AG04450 (cell line): ENCODE measurements at regions of chr11 and their contacts with region 1.

Region 1: GRCh38 chr11:46278387-46279125 is 1.1 kb downstream of the CREB3L1 start:
- DNase-seq: no peak
- H3K4me3 ChIP-seq: peak overlapping the region; percentile 95
- H3K27ac ChIP-seq: peak overlapping the region; percentile 91
- H3K27me3 ChIP-seq: no peaks in the 10 kb centered on the region
- CTCF ChIP-seq: peak; percentile 83

Region 2: DNA sequence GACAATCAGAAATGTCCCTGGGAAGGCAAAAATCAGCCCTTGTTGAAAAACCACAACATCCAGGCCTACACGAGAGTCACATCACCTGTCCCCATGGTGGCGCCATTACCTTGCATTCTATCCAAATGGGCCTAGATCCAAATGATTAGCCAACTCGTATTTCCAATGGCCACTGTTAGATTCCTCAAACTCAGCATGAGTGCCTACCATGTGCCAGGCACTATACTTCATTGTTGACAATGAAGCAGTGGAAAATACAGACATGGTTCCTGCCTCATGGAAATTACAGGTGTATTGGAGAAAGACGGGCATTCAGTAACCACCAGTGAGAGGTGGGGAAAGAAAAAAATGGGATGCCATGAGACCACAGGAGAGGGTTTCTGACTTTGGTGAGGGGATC is 30.9 kb before region 1 on chr11:
- CTCF ChIA-PET with region 1: interaction called, 89 read pairs
- POLR2A ChIA-PET with region 1: interaction called, 15 read pairs
- DNase-seq: no peak
- H3K4me3 ChIP-seq: no peak overlapping the region
- H3K27ac ChIP-seq: peak overlapping the region; percentile 99
- H3K27me3 ChIP-seq: no peaks in the 10 kb centered on the region
- CTCF ChIP-seq: peak; percentile 10; the same call in 1 of the 2 replicates

Region 3: GRCh38 chr11:46308631-46309419 is 30.3 kb after region 1 on chr11:
- CTCF ChIA-PET with region 1: interaction called, 51 read pairs
- POLR2A ChIA-PET with region 1: no interaction called
- DNase-seq: no peak
- H3K4me3 ChIP-seq: no peak overlapping the region
- H3K27ac ChIP-seq: peak overlapping the region; percentile 47
- H3K27me3 ChIP-seq: no peaks in the 10 kb centered on the region
- CTCF ChIP-seq: peak; percentile 87

Region 4: DNA sequence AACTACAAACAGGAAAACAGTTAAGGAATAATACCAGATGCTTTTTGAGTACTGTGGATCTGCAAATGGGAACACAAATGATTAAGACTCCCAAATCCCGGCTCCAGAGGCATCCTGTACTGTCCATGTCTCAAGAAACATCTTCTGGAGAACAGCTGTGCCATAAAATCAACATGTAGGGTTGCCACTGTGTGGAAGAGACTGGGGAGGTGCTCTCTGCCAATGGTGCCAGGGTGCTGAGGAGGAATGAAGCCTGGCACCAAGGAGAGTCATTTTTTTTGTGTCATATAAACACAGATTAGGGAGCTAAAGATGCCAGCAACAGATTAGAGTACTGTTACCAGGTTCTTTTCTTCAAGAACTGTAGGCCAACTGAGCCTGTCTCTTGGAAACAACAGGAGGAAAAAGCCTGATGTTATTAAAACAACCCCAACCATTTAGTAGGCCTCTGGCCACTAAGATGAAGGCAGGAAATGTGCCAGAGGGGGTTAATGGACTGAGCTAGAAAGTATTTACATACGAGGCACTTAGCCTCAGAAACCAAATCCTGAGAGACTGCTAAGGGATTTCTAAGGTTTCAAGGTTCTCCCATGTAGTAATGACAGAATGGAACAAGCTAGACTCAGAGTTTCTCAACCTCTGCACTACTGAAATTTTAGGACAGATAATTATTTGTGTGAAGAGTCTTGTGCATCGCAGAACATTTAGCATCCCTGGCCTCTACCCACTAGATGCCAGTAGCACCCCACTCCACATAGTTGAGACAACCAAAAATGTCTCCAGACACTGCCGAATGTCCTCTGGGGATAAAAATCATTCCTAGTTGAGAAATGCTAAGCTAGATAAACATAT is 167.6 kb after region 1 on chr11:
- CTCF ChIA-PET with region 1: no interaction called
- POLR2A ChIA-PET with region 1: no interaction called
- DNase-seq: no peak
- H3K4me3 ChIP-seq: no peak overlapping the region
- H3K27ac ChIP-seq: no peak overlapping the region
- H3K27me3 ChIP-seq: no peaks in the 10 kb centered on the region
- CTCF ChIP-seq: peak; percentile 42